Heart left ventricle (tissue), 16 donors: ENCODE measurements at regions of chr9 and their contacts with region 1.

Region 1: DNA sequence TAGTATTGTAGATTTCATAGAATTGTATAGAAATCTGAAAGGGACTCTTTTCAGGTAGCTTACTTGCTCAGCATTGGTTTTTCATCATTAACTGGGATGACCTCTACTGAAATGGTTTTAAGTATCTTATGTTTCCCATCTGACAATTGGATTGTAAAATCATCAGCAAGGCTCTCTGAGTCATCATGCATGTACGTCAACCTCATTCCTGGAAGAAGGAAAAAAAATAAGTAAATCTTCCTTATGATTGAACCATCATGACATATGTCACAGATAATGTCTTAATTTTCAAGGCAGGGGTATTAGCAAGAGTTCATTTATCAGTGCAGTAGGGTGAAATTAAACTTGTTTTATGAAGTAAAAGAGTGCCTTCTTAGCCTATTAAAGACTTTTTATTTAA is 74.9 kb upstream of the CER1 start:
- DNase-seq: no peak
- ATAC-seq: no peak
- H3K4me3 ChIP-seq: no peak overlapping the region
- H3K27ac ChIP-seq: no peak overlapping the region
- H3K4me1 ChIP-seq: no peaks in the 10 kb centered on the region
- H3K27me3 ChIP-seq: no peaks in the 10 kb centered on the region
- CTCF ChIP-seq: no peak
- POLR2A ChIP-seq: no peak

Region 2: DNA sequence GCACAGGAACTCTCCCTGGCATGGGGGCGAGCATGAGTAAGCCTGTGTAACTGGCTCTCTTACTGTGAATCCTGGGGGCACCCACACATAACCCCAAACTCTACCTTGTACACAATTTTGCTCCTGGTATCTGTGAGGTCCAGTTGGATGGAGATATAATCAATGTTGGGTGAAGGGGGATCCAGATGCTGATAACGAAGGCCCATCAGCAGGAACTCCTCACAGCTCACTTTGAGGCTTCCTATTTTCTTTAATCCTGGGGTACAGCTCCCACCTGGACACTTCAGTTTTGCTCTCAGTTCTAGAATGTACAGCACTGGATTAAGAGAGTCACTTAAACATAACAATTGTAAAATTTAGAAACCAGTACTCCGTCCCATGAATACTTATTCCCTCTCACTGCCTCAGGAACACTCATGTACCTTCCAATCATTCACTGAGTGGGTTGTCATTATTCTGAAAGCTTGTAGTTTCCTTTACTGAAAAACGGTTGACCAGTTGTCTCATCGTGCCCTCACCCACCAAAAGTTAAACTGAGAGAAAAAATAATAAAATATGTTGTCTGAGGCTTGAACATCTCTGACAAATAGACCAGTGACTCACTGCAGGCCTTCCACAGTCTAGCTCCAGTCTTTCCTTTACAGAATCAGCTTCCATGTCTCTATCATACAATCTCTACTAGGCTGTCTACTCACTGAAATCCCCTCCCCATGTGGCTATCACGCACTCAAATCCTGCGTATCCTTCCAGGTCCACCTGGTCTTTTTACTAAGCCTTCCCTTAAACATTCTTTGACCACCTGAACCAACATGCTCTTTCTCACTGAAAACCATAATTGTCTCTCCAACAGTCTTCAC is 60.2 kb after region 1 on chr9:
- intact Hi-C with region 1: loop called in 1 of 10 experiments (anchors 10 kb)
- DNase-seq: no peak
- ATAC-seq: no peak
- H3K4me3 ChIP-seq: no peak overlapping the region
- H3K27ac ChIP-seq: no peak overlapping the region
- H3K4me1 ChIP-seq: no peaks in the 10 kb centered on the region
- H3K27me3 ChIP-seq: no peaks in the 10 kb centered on the region
- CTCF ChIP-seq: no peak
- POLR2A ChIP-seq: no peak